ENCODE measurements at regions of chr3 and their contacts with region 1.

Region 1: GRCh38 chr3:67704322-67704721 is 49.9 kb upstream of the SUCLG2 start:
- DNase-seq: peak in 2 of 9 donors; percentile 4 to 11
- ATAC-seq: no peak
- H3K4me3 ChIP-seq: no peak overlapping the region
- H3K4me3 Mint-ChIP-seq: no peak overlapping the region
- H3K27ac ChIP-seq: no peak overlapping the region
- H3K27ac Mint-ChIP-seq: peak overlapping the region in 3 of 9 donors; percentile 2 to 57 (median 33)
- H3K4me1 ChIP-seq: no peaks in the 10 kb centered on the region
- H3K4me1 Mint-ChIP-seq: peaks cover 0 to 34% (median 18%) of the 10 kb centered on the region in 7 donors
- H3K27me3 ChIP-seq: no peaks in the 10 kb centered on the region
- H3K27me3 Mint-ChIP-seq: no peaks in the 10 kb centered on the region

Region 2: DNA sequence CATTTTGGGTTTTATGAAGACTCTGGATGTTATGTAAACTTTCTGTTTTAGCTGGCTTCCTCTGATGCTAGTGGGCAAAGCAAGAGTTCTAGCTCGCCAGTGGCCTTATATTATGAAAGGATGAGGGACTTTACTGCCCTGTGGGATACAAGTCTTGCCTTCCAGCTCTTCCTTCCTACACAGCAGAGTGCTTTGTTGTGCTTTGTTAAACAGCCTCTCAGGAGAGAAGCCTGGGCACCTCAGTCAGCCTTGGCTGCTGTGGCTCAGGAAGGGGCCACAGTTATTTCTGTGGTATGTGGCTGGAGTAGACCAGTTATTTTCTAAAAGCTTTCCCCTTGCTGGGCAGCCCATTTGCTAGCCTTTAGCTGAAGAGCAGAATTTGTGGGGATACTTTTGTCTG is 19.5 kb after region 1 on chr3:
- CTCF ChIA-PET with region 1: no interaction called
- POLR2A ChIA-PET with region 1: interaction called, 3 read pairs
- intact Hi-C with region 1: loop called in 1 of 2 experiments (anchors 2 kb)
- DNase-seq: no peak
- ATAC-seq: no peak
- H3K4me3 ChIP-seq: no peak overlapping the region
- H3K4me3 Mint-ChIP-seq: no peak overlapping the region
- H3K27ac ChIP-seq: no peak overlapping the region
- H3K27ac Mint-ChIP-seq: no peak overlapping the region
- H3K4me1 ChIP-seq: no peaks in the 10 kb centered on the region
- H3K4me1 Mint-ChIP-seq: peaks cover 0 to 43% (median 22%) of the 10 kb centered on the region in 7 donors
- H3K27me3 ChIP-seq: no peaks in the 10 kb centered on the region
- H3K27me3 Mint-ChIP-seq: no peaks in the 10 kb centered on the region